Left ventricle myocardium superior (tissue), 1 donor: ENCODE measurements at regions of chr6 and their contacts with region 1.

Region 1: GRCh38 chr6:1604158-1605030 is 5.3 kb upstream of the FOXC1 start:
- DNase-seq: peak; percentile 85
- ATAC-seq: peak; percentile 97

Region 2: DNA sequence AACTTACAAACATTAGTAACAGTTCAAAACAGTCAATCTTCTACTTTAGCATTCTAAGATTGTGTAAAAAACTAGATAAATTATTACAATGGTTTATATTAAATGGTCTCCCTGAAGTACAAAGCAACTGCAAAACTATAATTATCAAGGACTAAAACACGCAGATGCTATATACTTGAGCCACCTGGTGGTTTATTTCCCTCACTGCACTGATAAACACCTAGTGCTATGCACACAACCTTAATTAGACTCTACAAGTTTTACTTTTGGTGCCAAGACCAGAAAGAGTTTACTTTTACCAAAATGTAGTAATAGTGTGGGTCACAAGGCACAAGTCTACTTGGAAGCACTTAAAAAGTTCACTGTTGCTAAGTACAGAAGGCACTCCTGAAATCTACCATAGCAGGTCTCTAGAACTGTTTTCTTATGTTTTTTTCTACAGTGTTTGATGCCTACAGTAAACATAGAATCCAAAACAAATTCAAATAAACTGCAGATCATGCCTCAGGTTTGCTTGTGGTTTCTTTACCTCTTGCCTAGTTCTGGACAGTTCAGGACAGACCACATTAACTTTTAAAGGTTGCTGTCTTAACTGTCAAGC is 591.8 kb after region 1 on chr6:
- intact Hi-C with region 1: loop called (anchors 5 kb)
- DNase-seq: no peak
- ATAC-seq: peak; percentile 63